ENCODE measurements at regions of chr20 and their contacts with region 1.

Region 1: GRCh38 chr20:1440024-1440423 is 26.6 kb downstream of the NSFL1C start:
- DNase-seq: peak; percentile 30
- CTCF ChIP-seq: no peak

Region 2: DNA sequence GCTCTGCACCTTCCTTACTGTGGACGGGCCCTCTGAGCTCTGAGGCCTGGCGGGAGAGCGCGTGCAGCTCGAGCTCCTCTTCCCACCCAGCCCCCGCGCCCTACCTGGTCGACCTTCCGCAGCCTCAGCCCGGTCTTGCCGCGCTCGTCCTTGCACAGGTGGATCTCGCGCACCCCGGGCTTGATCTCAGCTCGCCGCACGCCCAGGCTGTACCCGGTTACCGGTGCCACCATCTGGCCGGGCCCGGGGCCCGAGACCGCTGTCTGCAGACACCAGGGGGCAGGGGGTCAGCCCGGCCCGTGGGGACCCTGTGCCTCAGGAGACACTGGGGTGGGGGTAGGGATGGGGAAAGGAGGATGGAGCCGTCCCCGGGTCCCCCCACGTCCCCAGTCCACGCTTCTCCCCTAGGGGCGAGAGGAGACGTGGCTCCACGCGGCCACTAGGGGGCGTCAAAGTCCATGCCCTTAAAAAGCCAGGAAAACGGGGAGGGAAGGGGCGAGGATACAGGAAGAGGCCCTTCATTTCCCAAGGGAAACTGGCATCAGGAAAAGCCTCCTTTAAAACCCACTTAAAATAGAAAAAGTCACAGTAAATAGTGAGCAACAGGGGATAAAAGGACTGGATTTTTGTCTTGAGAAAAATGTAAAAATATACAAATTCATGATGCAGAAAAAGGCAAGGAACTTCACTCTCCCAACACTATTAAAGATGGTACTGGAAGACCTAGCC is 126.6 kb before region 1 on chr20:
- in situ Hi-C with region 1: loop called (anchors 10 kb)
- DNase-seq: peak; percentile 85
- CTCF ChIP-seq: peak; percentile 79

Region 3: GRCh38 chr20:1353956-1354355 is 86.1 kb before region 1 on chr20:
- in situ Hi-C with region 1: no loop called
- DNase-seq: no peak
- CTCF ChIP-seq: no peak

Region 4: DNA sequence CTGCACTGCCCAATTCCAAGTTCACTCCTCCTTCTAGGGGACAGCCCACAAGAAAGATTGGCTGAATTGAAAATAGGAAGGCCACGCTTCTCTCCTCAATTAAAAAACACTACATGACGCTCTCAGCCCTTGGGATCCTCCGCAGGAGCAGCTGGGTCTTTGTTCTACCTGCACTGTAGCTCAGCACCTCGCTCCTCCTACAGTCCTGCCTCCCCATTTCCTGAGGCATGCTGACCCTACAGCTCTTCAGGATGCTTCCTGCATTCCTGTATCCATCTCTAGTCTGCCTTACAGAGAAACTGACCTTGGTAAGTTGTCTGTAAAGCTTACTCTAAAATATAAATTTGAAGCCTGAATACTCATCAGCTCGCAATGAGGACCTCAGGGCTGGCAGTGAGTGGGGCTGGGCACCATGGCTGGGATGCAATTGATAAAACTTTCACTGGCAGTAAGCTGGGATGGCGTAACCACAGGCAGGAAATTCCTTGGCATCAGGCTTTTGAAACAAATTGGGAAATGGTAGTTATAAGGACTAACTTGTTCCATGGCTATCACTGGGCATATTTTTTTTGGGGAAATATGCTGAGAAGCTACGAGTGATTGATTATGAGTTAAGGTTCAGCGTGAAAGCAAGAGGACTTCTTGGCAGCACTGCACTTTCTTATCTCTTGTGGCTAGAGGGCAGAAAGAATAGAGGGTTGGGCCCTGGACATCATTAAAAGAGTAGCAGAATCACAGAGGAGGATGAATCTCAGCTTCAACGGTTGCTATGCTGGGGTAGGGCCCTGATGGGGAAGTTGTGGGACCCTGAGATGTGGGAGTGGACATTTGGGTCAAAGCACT is 191.5 kb after region 1 on chr20:
- in situ Hi-C with region 1: no loop called
- DNase-seq: no peak
- CTCF ChIP-seq: no peak

Measured in GM13976 (cell line).